ENCODE measurements at regions of chr11 and their contacts with region 1.

Region 1: GRCh38 chr11:62081378-62082291 is 42.2 kb upstream of the INCENP start:
- DNase-seq: peak; percentile 74
- H3K4me3 ChIP-seq: no peak overlapping the region
- H3K27ac ChIP-seq: no peak overlapping the region
- H3K4me1 ChIP-seq: no peaks in the 10 kb centered on the region
- H3K27me3 ChIP-seq: no peaks in the 10 kb centered on the region
- CTCF ChIP-seq: peak; percentile 79 to 87
- POLR2A ChIP-seq: no peak

Region 2: GRCh38 chr11:61747192-61747966 is 334.3 kb before region 1 on chr11:
- CTCF ChIA-PET with region 1: interaction called, 10 read pairs
- POLR2A ChIA-PET with region 1: no interaction called
- dilution Hi-C with region 1: no loop called
- intact Hi-C with region 1: no loop called
- DNase-seq: peak; percentile 52
- H3K4me3 ChIP-seq: no peak overlapping the region
- H3K27ac ChIP-seq: no peak overlapping the region
- H3K4me1 ChIP-seq: no peaks in the 10 kb centered on the region
- H3K27me3 ChIP-seq: no peaks in the 10 kb centered on the region
- CTCF ChIP-seq: peak; percentile 93 to 98
- POLR2A ChIP-seq: no peak

Region 3: DNA sequence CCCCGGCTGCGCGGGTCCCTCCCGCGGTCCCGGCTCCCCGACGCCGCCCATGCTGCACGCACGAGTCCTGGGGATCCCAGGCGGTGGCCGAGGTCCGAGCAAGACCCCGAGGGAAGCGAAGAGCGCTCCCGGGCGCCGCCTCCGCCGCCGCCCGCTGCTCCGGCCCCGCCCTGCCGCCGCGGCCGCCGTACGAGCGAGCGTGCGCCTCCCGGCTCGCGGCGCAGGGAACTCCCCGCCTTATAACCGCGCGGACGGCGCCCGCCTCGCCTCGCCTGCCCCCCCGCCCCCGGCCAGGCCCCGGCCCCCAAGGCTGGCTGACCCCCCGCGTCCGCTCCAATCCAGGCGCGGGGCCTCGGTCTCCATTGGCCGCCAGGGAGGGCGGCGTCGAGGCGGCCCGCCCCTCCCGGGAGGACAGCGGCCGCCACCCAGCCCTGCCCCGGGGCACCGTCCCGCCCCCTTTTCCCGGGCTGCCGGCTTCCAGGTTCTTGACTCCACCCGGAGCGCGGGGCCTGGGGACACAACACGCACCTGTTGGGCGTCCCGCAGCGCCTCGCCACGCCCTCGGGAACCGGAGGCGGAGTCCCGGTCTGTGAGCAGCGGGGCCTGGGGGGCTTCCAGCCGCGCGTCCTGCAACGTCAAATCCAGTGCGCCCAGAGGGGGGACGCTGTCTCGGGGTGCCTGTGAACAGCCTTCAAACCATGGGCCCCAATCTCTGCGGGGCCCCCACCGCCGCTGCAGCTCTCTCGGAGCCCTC is 190.1 kb before region 1 on chr11 and contains the start of gene FADS3:
- CTCF ChIA-PET with region 1: interaction called, 416 read pairs
- POLR2A ChIA-PET with region 1: no interaction called
- dilution Hi-C with region 1: no loop called
- intact Hi-C with region 1: no loop called
- DNase-seq: peak; percentile 81
- H3K4me3 ChIP-seq: peak within 1 kb of the TSS; percentile 41 to 70 (median 70)
- H3K27ac ChIP-seq: peak within 1 kb of the TSS; percentile 58
- H3K4me1 ChIP-seq: peaks cover 32% of the 10 kb centered on the region
- H3K27me3 ChIP-seq: no peaks in the 10 kb centered on the region
- CTCF ChIP-seq: no peak
- POLR2A ChIP-seq: peak; percentile 78
- total RNA-seq, gene FADS3: 204 and 216 TPM in 2 replicates

Region 4: DNA sequence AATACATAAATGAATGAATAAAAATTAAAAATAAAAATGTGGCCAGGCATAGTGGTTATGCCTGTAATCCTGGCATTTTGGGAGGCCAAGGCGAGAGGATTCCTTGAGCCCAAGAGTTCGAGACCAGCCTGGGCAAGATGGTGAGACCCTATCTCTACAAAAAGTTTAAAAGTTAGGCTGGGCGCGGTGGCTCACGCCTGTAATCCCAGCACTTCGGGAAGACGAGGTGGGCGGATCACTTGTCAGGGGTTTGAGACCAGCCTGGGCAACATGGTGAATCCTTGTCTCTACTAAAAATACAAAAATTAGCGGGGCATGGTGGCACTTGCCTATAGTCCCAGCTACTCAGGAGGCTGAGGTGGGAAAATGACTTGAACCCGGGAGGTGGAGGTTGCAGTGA is 141.2 kb before region 1 on chr11:
- CTCF ChIA-PET with region 1: interaction called, 254 read pairs
- POLR2A ChIA-PET with region 1: no interaction called
- dilution Hi-C with region 1: no loop called
- intact Hi-C with region 1: no loop called
- DNase-seq: no peak
- H3K4me3 ChIP-seq: no peak overlapping the region
- H3K27ac ChIP-seq: no peak overlapping the region
- H3K4me1 ChIP-seq: no peaks in the 10 kb centered on the region
- H3K27me3 ChIP-seq: peaks cover 2 to 14% of the 10 kb centered on the region in 2 experiments
- CTCF ChIP-seq: no peak
- POLR2A ChIP-seq: no peak

Region 5: GRCh38 chr11:61967116-61967923 is 114.3 kb before region 1 on chr11 and contains the start of gene FTH1:
- CTCF ChIA-PET with region 1: interaction called, 147 read pairs
- POLR2A ChIA-PET with region 1: interaction called, 19 read pairs
- dilution Hi-C with region 1: no loop called
- intact Hi-C with region 1: loop called (anchors 1 kb)
- DNase-seq: peak; percentile 89
- H3K4me3 ChIP-seq: peak within 1 kb of the TSS; percentile 98 to 99 (median 99)
- H3K27ac ChIP-seq: peak within 1 kb of the TSS; percentile 60
- H3K4me1 ChIP-seq: peaks cover 63% of the 10 kb centered on the region
- H3K27me3 ChIP-seq: no peaks in the 10 kb centered on the region
- CTCF ChIP-seq: no peak
- POLR2A ChIP-seq: peak; percentile 97
- total RNA-seq, gene FTH1: 2,371 and 2,501 TPM in 2 replicates

Region 6: DNA sequence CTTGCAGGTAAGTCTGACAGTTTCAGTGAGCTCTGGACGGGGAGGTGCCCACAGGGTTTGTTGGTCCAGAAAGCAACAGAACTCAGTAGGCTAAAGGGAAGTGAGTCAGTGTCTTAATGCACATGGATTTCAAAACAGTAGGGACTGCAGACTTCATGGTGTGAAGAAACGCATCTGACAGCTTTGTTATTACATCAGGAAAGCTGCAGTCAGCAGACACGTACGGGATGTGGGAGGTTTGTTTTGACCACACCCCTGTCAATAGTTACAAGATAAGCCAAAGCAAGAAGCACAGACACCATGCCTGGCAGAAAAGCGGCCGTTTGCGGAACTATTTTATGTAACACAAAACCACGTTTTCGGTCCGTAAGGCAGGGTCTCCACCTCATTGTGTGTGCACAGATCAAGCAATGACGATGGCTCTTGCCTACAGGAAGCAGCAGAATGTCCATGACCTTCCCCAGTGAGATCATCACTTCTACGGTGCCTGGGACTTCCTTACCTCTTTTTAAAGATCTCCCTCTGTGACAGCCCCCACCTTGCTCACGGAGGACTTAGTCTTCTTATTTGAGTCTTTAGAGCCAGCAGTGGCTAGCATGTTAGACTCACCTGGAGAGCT is 56.0 kb before region 1 on chr11:
- CTCF ChIA-PET with region 1: interaction called, 11 read pairs
- POLR2A ChIA-PET with region 1: no interaction called
- dilution Hi-C with region 1: no loop called
- intact Hi-C with region 1: no loop called
- DNase-seq: peak; percentile 94
- H3K4me3 ChIP-seq: no peak overlapping the region
- H3K27ac ChIP-seq: peak overlapping the region; percentile 69
- H3K4me1 ChIP-seq: peaks cover 15% of the 10 kb centered on the region
- H3K27me3 ChIP-seq: no peaks in the 10 kb centered on the region
- CTCF ChIP-seq: no peak
- POLR2A ChIP-seq: no peak

Region 7: GRCh38 chr11:62069986-62070919 is 11.4 kb before region 1 on chr11:
- CTCF ChIA-PET with region 1: interaction called, 23 read pairs
- POLR2A ChIA-PET with region 1: no interaction called
- dilution Hi-C with region 1: no loop called
- intact Hi-C with region 1: no loop called
- DNase-seq: no peak
- H3K4me3 ChIP-seq: no peak overlapping the region
- H3K27ac ChIP-seq: no peak overlapping the region
- H3K4me1 ChIP-seq: no peaks in the 10 kb centered on the region
- H3K27me3 ChIP-seq: peaks cover 0 to 5% of the 10 kb centered on the region in 2 experiments
- CTCF ChIP-seq: no peak
- POLR2A ChIP-seq: no peak

Region 8: GRCh38 chr11:62132188-62132587 is 50.6 kb after region 1 on chr11:
- CTCF ChIA-PET with region 1: no interaction called
- POLR2A ChIA-PET with region 1: no interaction called
- dilution Hi-C with region 1: no loop called
- intact Hi-C with region 1: no loop called
- DNase-seq: no peak
- H3K4me3 ChIP-seq: no peak overlapping the region
- H3K27ac ChIP-seq: no peak overlapping the region
- H3K4me1 ChIP-seq: no peaks in the 10 kb centered on the region
- H3K27me3 ChIP-seq: no peaks in the 10 kb centered on the region
- CTCF ChIP-seq: no peak
- POLR2A ChIP-seq: no peak

Region 9: GRCh38 chr11:62143727-62144126 is 62.1 kb after region 1 on chr11:
- CTCF ChIA-PET with region 1: no interaction called
- POLR2A ChIA-PET with region 1: no interaction called
- dilution Hi-C with region 1: no loop called
- intact Hi-C with region 1: no loop called
- DNase-seq: peak; percentile 30
- H3K4me3 ChIP-seq: no peak overlapping the region
- H3K27ac ChIP-seq: no peak overlapping the region
- H3K4me1 ChIP-seq: no peaks in the 10 kb centered on the region
- H3K27me3 ChIP-seq: no peaks in the 10 kb centered on the region
- CTCF ChIP-seq: peak; percentile 5 to 43
- POLR2A ChIP-seq: no peak